Calu3 (cell line): ENCODE measurements at regions of chr3 and their contacts with region 1.

Region 1: GRCh38 chr3:99753268-99753975 is 64.2 kb upstream of the CMSS1 start:
- DNase-seq: peak; percentile 42
- H3K4me3 Mint-ChIP-seq: no peak overlapping the region
- H3K27ac Mint-ChIP-seq: no peak overlapping the region
- H3K4me1 Mint-ChIP-seq: peaks cover 9% of the 10 kb centered on the region
- H3K27me3 Mint-ChIP-seq: peaks cover 11% of the 10 kb centered on the region
- CTCF ChIP-seq: peak; percentile 33

Region 2: DNA sequence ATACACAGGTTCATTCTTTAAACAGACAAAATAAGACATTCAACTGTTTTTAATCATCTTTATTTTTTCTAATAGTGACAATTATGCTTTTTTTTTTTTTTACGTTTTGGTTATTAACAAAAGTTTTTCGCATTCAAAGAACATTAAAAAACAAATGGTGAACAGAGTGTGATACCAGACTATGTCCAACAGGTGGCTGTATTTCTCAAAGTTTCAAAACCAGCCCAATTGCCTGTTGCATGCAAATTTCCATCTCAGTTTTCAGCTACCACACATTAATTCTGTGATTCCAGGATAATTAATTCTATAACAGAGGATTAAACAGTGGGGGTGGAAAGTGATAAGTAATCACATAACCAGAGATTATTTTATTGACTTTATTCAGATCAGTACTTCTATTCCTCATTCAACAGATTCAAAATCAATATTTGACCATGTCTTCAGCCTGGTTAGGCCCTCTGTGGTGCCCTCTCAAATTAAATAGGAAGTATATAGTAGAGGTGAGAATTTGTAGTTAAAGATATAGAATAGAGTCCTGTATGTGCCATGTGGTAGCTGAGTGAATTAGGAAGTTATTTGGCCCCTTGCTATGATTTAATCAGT is 729.7 kb before region 1 on chr3:
- CTCF ChIA-PET with region 1: no interaction called
- intact Hi-C with region 1: loop called (anchors 1 kb)
- DNase-seq: peak; percentile 7
- H3K4me3 Mint-ChIP-seq: no peak overlapping the region
- H3K27ac Mint-ChIP-seq: no peak overlapping the region
- H3K4me1 Mint-ChIP-seq: no peaks in the 10 kb centered on the region
- H3K27me3 Mint-ChIP-seq: no peaks in the 10 kb centered on the region
- CTCF ChIP-seq: peak; percentile 30

Region 3: GRCh38 chr3:99114565-99115291 is 638.7 kb before region 1 on chr3:
- CTCF ChIA-PET with region 1: interaction called, 3 read pairs
- intact Hi-C with region 1: loop called (anchors 1 kb)
- DNase-seq: peak; percentile 43
- H3K4me3 Mint-ChIP-seq: no peak overlapping the region
- H3K27ac Mint-ChIP-seq: no peak overlapping the region
- H3K4me1 Mint-ChIP-seq: no peaks in the 10 kb centered on the region
- H3K27me3 Mint-ChIP-seq: no peaks in the 10 kb centered on the region
- CTCF ChIP-seq: peak; percentile 54

Region 4: GRCh38 chr3:99172736-99173657 is 580.4 kb before region 1 on chr3:
- CTCF ChIA-PET with region 1: no interaction called
- intact Hi-C with region 1: loop called (anchors 2 kb)
- DNase-seq: peak; percentile 66
- H3K4me3 Mint-ChIP-seq: no peak overlapping the region
- H3K27ac Mint-ChIP-seq: no peak overlapping the region
- H3K4me1 Mint-ChIP-seq: no peaks in the 10 kb centered on the region
- H3K27me3 Mint-ChIP-seq: no peaks in the 10 kb centered on the region
- CTCF ChIP-seq: peak; percentile 61

Region 5: DNA sequence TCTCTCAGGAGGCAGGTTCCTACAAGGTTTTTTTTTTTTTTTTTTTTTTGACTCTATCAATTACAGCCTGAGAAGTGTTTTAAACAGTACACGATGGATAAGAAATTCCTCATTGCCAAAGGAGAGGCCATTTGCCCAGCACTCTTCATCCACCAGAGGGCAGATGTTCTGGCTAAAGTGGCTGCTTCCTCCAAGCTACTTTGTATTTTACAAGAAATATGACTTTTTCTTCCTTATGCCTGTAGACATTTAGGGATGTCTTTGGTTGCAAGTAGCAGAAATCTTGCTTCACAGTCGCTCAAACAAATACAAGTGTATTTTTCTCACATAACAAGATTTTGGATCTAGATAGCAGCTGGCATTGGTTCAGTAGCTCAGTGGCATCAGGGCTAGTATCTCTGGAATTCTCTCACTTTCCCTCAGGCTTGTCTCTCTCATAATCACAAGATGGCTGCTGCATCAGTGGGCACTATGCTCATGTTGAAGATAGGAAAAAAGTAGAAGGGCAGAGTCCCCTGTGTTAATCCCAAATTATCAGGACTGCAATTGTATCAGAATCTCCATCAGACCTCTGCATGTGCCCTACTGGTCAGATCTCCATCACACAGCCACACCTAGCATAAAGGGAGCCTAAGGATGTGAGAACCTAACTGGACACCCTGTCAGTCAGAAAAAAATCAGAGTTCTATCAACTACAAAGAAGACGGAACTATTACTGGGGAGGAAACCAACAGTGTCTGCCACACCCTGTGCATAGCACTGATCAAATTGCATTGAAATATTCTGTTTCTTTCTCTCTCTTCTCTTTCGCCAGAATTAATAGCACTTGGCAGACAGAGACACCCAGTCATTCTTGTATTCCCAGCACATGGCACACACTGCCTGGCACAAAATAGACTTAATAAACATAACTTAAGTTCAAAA is 253.9 kb before region 1 on chr3:
- CTCF ChIA-PET with region 1: interaction called, 6 read pairs
- intact Hi-C with region 1: loop called (anchors 1 kb)
- DNase-seq: peak; percentile 56
- H3K4me3 Mint-ChIP-seq: no peak overlapping the region
- H3K27ac Mint-ChIP-seq: no peak overlapping the region
- H3K4me1 Mint-ChIP-seq: peaks cover 7% of the 10 kb centered on the region
- H3K27me3 Mint-ChIP-seq: no peaks in the 10 kb centered on the region
- CTCF ChIP-seq: peak; percentile 25

Region 6: GRCh38 chr3:99645277-99646106 is 107.9 kb before region 1 on chr3:
- CTCF ChIA-PET with region 1: interaction called, 8 read pairs
- intact Hi-C with region 1: loop called (anchors 2 kb)
- DNase-seq: peak; percentile 15
- H3K4me3 Mint-ChIP-seq: no peak overlapping the region
- H3K27ac Mint-ChIP-seq: no peak overlapping the region
- H3K4me1 Mint-ChIP-seq: peaks cover 25% of the 10 kb centered on the region
- H3K27me3 Mint-ChIP-seq: no peaks in the 10 kb centered on the region
- CTCF ChIP-seq: peak; percentile 76

Region 7: DNA sequence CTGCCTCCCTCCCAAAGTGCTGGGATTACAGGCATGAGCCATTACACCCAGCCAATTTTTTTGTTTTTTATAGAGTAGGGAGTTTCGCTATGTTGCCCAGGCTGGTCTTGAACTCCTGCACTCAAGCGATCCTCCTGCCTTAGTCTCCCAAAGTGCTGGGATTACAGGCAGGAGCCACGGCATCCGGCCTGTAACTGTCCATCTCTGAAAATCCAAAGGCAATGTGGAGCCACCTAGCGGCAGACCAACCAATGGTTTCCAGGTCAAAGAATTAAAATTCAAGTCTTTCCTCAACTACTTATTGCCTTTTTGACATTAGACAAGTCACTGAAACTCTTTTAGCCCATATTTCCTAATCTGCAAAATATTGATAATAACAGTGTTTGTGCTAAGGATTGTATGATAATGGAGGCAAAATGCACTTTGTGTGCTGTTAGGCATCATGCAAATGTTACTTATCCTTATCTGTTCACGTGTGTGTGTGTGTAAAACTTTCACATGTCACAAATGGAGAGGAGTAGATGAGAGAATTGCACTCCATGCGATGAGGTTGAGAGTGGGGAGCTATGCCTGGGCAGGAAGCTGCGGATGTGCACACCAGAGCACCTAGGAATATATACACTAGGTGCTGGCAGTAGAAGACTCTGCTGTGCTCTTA is 66.3 kb before region 1 on chr3:
- CTCF ChIA-PET with region 1: no interaction called
- intact Hi-C with region 1: loop called (anchors 5 kb)
- DNase-seq: peak; percentile 80
- H3K4me3 Mint-ChIP-seq: no peak overlapping the region
- H3K27ac Mint-ChIP-seq: no peak overlapping the region
- H3K4me1 Mint-ChIP-seq: no peaks in the 10 kb centered on the region
- H3K27me3 Mint-ChIP-seq: no peaks in the 10 kb centered on the region
- CTCF ChIP-seq: peak; percentile 61